ENCODE measurements at regions of chr12 and their contacts with region 1.

Region 1: GRCh38 chr12:108856428-108857157 is 790 bp downstream of the SSH1 start:
- DNase-seq: peak; percentile 58 to 81 (median 71)
- H3K4me3 ChIP-seq: peak overlapping the region; percentile 95
- H3K4me3 Mint-ChIP-seq: peak overlapping the region; percentile 94 to 99 (median 99)
- H3K27ac ChIP-seq: peak overlapping the region; percentile 69
- H3K27ac Mint-ChIP-seq: peak overlapping the region; percentile 95 to 99 (median 98)
- H3K4me1 ChIP-seq: peaks cover 30% of the 10 kb centered on the region
- H3K4me1 Mint-ChIP-seq: peaks cover 40 to 51% (median 47%) of the 10 kb centered on the region in 3 donors
- H3K27me3 ChIP-seq: no peaks in the 10 kb centered on the region
- H3K27me3 Mint-ChIP-seq: peaks cover 0 to 5% of the 10 kb centered on the region in 2 donors

Region 2: GRCh38 chr12:108838194-108839017 is 18.2 kb before region 1 on chr12:
- CTCF ChIA-PET with region 1: no interaction called
- POLR2A ChIA-PET with region 1: interaction called, 12 read pairs
- DNase-seq: peak in 4 of 5 donors; percentile 49 to 80 (median 60)
- H3K4me3 ChIP-seq: peak overlapping the region; percentile 2
- H3K4me3 Mint-ChIP-seq: peak overlapping the region in 6 of 7 donors; percentile 32 to 87 (median 72)
- H3K27ac ChIP-seq: peak overlapping the region; percentile 45
- H3K27ac Mint-ChIP-seq: peak overlapping the region; percentile 73 to 98 (median 92)
- H3K4me1 ChIP-seq: peaks cover 24% of the 10 kb centered on the region
- H3K4me1 Mint-ChIP-seq: peaks cover 43 to 56% (median 48%) of the 10 kb centered on the region in 3 donors
- H3K27me3 ChIP-seq: no peaks in the 10 kb centered on the region
- H3K27me3 Mint-ChIP-seq: peaks cover 0 to 2% of the 10 kb centered on the region in 2 donors

Region 3: GRCh38 chr12:109020796-109021380 is 164.3 kb after region 1 on chr12 and contains the start of gene SVOP:
- CTCF ChIA-PET with region 1: no interaction called
- POLR2A ChIA-PET with region 1: no interaction called
- DNase-seq: peak in 1 of 5 donors; percentile 1
- H3K4me3 ChIP-seq: no peak within 1 kb of the TSS
- H3K4me3 Mint-ChIP-seq: peak within 1 kb of the TSS in 1 of 7 donors; percentile 6
- H3K27ac ChIP-seq: no peak within 1 kb of the TSS
- H3K27ac Mint-ChIP-seq: peak within 1 kb of the TSS in 2 of 8 donors; percentile 3 to 21
- H3K4me1 ChIP-seq: peaks cover 3% of the 10 kb centered on the region
- H3K4me1 Mint-ChIP-seq: peaks cover 0 to 12% (median 2%) of the 10 kb centered on the region in 3 donors
- H3K27me3 ChIP-seq: peaks cover 6% of the 10 kb centered on the region
- H3K27me3 Mint-ChIP-seq: peaks cover 16 to 54% of the 10 kb centered on the region in 2 donors
- total RNA-seq, gene SVOP: not detected

Measured in CD8-positive, alpha-beta memory T cell (primary cell).